Posterior vena cava (tissue), 2 donors: ENCODE measurements at regions of chr11 and their contacts with region 1.

Region 1: DNA sequence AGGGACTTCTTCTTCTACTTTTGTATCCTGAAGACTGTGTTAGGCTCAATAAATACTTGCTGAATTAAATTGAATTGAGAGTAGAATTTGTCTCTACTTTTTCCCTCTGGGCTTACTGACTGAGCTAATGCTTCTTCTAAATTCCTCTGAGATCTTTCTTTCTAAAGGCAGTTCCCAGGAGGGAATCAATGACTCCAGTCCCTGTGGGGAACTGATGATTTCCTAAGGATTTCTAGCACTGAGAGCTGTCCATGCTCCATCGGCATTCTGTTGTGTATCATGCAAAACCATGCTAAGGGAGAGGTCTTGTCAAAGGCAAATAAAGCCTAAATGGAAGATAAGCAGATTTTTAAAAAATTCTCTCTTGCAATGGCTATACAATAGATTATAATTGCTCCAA is 148.8 kb upstream of the KIRREL3 start:
- DNase-seq: no peak

Region 2: GRCh38 chr11:127056338-127056971 is 93.0 kb before region 1 on chr11:
- intact Hi-C with region 1: no loop called
- DNase-seq: no peak

Region 3: DNA sequence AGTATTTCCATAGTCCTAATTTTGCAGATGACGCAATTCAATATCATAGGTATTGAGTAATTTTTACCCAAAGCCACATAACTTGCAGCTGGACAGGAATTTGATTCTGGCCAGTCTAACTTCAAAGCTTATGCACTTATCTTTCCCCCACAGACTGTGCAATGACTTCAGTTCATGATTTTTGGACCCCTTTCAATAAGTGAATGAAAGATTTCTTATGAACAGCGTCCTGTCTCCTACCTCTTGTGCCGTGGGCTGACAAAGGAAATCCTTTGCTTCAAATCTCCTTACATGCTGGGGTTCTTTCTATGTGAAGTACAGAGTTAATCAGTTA is 68.8 kb after region 1 on chr11:
- intact Hi-C with region 1: loop called in 1 of 2 experiments (anchors 2 kb)
- DNase-seq: no peak